ENCODE measurements at regions of chr21 and their contacts with region 1.

Region 1: DNA sequence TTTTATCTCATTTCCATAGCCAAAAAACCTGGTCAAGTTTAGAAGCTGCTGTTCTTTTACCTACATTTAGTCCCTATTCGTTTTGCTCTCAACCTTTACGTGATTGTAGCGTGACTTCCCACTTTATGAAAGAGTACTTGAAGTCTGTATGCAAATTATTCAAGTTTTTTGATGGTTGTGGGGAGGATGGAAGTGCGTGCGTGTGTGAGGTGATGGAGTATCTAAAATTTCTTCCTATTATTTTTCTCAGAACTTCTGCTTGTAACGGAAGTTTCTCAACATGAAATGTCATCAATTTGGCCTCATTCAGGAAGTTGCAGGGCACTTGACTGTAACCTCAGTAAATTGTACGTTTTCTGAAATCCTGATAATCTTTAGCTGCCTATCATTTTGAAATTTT is 64.0 kb downstream of the SAMSN1 start:
- H3K4me3 Mint-ChIP-seq: peak overlapping the region; percentile 30
- H3K27ac Mint-ChIP-seq: peak overlapping the region; percentile 81
- H3K4me1 Mint-ChIP-seq: peaks cover 62% of the 10 kb centered on the region
- H3K27me3 Mint-ChIP-seq: no peaks in the 10 kb centered on the region

Region 2: DNA sequence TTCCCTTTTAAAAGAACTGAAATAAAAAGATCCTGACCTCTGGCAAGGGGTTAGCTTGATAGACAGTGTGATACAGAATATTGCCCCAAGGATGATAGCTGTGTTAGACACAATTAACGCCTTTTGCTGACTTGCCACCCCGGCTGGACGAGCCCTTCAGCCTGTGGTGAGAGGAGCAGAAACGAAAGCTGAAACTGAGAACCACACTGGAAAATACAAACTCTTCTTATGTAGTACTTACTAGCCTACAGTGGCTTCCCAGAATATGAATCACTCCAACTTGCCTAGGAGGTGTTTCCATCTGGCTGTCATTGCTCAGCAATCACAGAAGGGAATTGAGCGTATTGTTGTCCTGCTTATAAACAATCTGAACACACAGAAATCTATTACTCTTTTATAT is 41.1 kb after region 1 on chr21:
- intact Hi-C with region 1: loop called (anchors 5 kb)
- H3K4me3 Mint-ChIP-seq: peak overlapping the region; percentile 65
- H3K27ac Mint-ChIP-seq: peak overlapping the region; percentile 85
- H3K4me1 Mint-ChIP-seq: peaks cover 36% of the 10 kb centered on the region
- H3K27me3 Mint-ChIP-seq: no peaks in the 10 kb centered on the region

Region 3: DNA sequence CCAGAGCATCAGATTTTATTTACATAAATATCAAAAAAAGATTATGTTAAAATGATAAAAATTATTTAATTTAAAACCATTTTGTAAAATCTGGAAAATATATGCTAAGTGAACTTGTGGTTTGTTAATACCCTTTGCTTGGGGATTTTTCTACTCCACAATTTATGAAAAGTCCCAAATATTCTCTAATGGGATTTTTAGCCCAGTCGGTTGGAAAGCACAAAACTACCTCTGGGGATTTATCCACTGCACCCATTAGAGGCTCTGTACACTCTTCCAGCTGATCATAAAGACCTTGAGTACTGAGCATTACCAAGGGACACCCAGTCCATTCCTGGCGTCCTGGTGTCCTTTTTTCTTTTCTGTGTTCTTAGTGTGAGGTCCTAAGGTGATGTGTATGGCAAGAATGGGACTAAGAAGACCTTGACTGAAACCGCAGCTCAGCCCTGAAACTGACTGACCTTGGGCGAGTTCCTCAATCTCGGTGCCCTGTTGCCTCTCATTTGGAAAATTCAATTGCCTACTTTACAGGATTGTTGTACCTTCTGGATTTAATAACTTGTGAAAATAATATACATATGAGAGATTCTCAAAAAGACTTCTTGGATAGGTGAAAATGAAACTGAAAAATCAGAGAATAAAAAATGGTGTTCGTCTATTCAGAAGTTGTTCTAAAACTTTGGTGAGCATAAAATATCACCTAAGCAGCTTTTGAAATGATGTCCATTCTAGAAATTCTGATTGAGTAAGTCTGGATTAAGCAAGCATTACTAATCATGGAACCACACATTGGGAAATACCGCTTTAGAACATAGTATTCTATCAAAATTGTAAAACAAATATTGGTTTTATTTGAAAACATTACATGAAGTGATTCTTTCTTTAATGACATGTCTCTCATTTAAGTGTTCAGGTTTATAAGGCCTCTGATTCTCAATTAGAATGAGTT is 85.4 kb after region 1 on chr21:
- intact Hi-C with region 1: no loop called
- H3K4me3 Mint-ChIP-seq: no peak overlapping the region
- H3K27ac Mint-ChIP-seq: no peak overlapping the region
- H3K4me1 Mint-ChIP-seq: peaks cover 20% of the 10 kb centered on the region
- H3K27me3 Mint-ChIP-seq: no peaks in the 10 kb centered on the region